ENCODE measurements at regions of chr14 and their contacts with region 1.

Region 1: GRCh38 chr14:21557084-21557901 is 22.6 kb downstream of the OR10G3 start:
- DNase-seq: peak; percentile 22 to 89 (median 61)

Region 2: GRCh38 chr14:21437063-21437901 is 120.0 kb before region 1 on chr14:
- intact Hi-C with region 1: loop called (anchors 5 kb)
- DNase-seq: peak; percentile 98 to 100 (median 99)

Region 3: GRCh38 chr14:21498553-21499526 is 58.5 kb before region 1 on chr14:
- intact Hi-C with region 1: loop called (anchors 1 kb)
- DNase-seq: no peak

Region 4: DNA sequence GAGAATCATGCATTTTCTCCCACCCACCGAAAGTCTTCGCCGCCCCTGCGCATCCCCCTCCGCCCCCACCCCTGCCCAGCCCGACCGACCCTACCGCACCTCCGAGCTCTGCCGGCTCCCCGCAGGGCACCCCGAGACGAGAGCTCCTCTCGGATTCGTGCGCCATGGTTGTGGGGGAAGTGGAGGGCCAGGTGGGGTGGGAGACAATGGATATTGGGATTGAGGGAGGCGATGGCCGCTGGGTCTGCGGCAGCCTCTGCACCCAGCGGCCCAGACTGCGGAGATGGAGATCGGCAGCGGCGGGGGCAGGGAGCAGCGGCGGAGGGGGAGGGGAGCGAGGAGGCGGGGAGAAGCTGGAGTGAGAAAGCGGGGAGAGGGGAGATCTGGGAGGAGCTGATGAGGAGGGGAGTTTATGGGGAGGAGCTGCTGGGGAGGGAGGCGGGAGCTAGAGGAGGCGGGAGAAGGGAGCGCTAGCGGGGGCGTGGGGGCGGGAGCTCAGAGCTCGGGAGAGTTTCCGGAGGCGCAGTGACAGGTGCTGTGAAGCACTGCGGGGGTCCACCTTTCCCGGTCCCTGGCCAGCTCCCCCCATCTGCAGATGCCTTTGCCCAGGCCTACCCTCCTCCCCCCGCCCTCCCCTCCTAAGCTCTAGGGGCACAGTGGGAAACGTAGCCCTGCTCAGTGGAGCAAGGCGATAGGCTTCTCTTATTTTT is 31.2 kb before region 1 on chr14 and contains the start of gene SALL2:
- intact Hi-C with region 1: loop called (anchors 2 kb)
- DNase-seq: peak; percentile 64 to 97 (median 74)

Region 5: DNA sequence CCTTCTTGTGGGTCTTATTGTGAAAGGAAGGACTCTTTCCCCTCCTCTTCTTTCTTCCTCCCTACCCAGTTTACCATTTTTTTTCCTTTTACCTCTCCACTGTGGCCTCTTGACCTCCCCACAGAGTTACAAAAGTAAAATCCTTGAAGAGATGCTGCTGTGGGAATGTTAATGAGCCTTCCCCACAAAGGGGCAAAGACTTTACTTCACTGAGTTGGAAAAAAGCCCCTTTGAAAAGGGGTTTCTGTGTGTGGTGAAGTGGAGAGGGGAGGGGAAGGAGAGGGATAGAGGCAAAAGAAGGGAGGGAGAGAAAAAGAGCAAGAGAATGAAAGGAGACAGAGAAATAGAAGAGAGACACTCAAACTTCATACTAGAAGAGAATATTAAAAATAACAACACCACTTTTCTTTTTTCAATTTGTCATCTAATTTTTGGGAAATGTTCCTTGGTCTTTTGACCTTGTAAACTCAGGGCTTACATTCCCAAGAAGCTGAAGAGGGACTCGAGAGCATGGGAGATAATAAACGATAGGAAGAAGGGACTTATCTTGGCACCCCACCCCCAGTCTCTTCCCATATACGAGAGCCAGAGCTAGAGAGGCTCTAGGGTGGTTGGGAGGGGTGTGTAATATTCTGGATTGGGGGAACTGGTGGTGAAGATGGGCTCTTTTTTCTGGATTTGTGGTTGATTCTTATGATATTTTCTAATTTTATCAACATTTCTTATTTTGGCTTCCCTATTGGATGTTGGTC is 17.9 kb before region 1 on chr14:
- intact Hi-C with region 1: loop called (anchors 1 kb)
- DNase-seq: no peak

Region 6: GRCh38 chr14:22021706-22022105 is 464.4 kb after region 1 on chr14:
- intact Hi-C with region 1: no loop called
- DNase-seq: no peak

Measured in posterior cingulate gyrus (tissue), 11 donors.